ENCODE measurements at regions of chr7 and their contacts with region 1.

Region 1: GRCh38 chr7:27605689-27606269 is 56.9 kb downstream of the HIBADH start:
- DNase-seq: peak; percentile 75
- ATAC-seq: peak; percentile 68
- H3K4me3 ChIP-seq: peak overlapping the region; percentile 50
- H3K27ac ChIP-seq: peak overlapping the region; percentile 91
- H3K4me1 ChIP-seq: peaks cover 30% of the 10 kb centered on the region
- H3K27me3 ChIP-seq: no peaks in the 10 kb centered on the region
- CTCF ChIP-seq: peak; percentile 62

Region 2: DNA sequence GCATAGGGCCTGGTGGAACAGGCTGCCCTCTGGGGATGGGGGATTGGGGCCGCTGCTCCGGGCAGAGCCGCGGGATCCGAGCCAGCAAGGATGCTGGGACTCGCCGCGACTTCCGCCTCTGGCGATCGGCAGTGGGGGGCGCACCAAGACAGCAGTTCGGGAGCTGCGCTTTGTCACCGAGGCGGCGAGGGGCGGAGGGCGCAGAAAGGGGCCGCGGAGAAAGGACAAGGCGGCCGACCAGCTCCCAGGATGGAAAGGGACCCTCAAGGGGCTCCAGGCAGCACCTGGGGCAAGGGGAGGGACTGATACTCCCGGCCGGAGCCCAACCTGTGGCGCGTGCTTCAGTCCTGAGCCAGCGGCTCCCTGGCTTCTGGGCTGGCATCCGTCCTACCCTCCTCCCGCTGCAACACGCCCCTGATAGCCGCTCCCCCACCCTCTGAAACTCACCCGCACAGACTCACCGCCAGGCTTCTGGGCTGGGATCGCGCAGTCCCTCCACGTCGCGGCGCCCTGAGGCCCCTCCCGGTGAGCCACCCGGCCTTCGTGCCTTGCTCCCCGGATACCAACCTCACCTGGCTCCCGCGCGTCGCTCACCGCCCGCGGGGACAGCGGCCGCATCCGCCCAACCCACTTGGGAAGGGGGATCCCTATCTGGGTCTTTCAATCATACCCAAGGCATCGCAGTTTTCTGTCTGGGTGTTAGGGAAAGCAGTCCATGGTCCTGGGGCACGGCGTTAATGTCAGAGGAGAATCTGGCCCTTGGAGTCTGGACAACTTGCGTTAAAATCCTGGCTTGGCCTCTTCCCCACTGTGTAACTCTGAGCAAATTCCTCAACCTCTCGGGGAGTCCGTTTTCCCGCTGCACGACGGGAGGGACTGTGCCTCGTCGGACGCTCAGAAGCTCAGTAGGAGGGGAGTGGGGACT is 370.1 kb before region 1 on chr7:
- CTCF ChIA-PET with region 1: interaction called, 10 read pairs
- POLR2A ChIA-PET with region 1: no interaction called
- intact Hi-C with region 1: loop called (anchors 1 kb)
- DNase-seq: peak; percentile 62
- ATAC-seq: peak; percentile 76
- H3K4me3 ChIP-seq: peak overlapping the region; percentile 72
- H3K27ac ChIP-seq: no peak overlapping the region
- H3K4me1 ChIP-seq: peaks cover 9% of the 10 kb centered on the region; the same call in 1 of the 2 replicates
- H3K27me3 ChIP-seq: no peaks in the 10 kb centered on the region
- CTCF ChIP-seq: peak; percentile 75

Region 3: DNA sequence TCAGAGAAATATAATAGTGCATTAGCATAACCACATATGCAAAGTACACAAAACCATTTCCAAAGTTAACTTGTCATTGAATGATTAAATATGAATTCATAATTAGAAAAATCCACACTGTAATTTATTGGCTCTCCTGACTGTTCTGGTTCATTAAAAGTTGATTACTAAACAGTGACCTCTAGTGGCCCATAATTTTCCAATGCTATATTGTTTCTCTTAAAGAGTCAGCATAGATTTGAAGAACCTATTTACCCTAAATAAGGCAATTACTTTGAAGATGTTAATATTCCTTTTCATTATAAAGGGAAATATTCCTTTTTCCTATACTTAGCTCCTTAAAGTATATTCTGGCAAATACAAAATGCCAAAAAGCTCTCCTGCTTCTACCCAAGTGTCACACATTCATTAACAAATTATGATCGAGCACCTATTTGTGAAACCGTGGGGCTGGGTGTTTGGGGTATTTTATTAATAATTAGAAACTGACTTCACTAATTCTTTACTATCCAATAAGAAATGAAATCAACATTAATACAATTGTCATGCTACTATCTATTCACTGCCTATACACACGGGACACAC is 29.3 kb before region 1 on chr7:
- CTCF ChIA-PET with region 1: interaction called, 3 read pairs
- POLR2A ChIA-PET with region 1: no interaction called
- intact Hi-C with region 1: loop called (anchors 1 kb)
- DNase-seq: peak; percentile 79
- ATAC-seq: peak; percentile 56
- H3K4me3 ChIP-seq: no peak overlapping the region
- H3K27ac ChIP-seq: no peak overlapping the region
- H3K4me1 ChIP-seq: peaks cover 11% of the 10 kb centered on the region
- H3K27me3 ChIP-seq: no peaks in the 10 kb centered on the region
- CTCF ChIP-seq: peak; percentile 80

Region 4: GRCh38 chr7:27662490-27663205 is 56.9 kb after region 1 on chr7 and contains the start of gene HIBADH:
- CTCF ChIA-PET with region 1: interaction called, 5 read pairs
- POLR2A ChIA-PET with region 1: no interaction called
- intact Hi-C with region 1: loop called (anchors 1 kb)
- DNase-seq: peak; percentile 99
- ATAC-seq: peak; percentile 98
- H3K4me3 ChIP-seq: peak within 1 kb of the TSS; percentile 81
- H3K27ac ChIP-seq: peak within 1 kb of the TSS; percentile 60
- H3K4me1 ChIP-seq: 0 out of 2 replicates have a peak, but pooled peaks cover 7% of the 10 kb centered on the region
- H3K27me3 ChIP-seq: no peaks in the 10 kb centered on the region
- CTCF ChIP-seq: no peak
- total RNA-seq, gene HIBADH: 43.7 and 45.8 TPM in 2 replicates

Region 5: DNA sequence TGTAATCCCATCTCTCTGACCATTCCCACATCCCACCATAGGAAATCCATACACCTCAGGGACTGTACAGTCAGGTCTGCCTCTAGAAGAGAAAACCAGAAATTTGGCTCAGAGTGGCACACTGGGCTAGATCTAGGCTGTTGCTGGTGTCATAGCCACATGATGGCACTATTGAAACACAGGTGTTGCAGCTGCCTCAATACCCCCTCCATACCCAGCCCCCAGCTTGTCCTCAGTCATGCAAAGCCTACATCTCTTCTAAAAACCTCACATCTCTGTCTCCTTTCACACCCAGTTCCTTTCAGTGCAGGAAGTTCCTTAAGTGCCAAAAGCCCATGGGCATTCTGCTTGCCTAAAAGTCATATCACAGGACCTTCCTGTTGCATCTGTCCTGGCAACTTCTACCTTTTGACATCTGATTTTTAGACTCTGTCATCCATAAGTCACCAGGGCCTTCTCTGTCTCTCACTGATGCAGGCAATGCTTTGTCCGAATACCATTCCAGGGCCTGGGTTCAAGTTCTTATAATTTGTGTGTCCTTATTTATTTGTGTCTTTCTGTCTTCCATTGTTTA is 83.9 kb after region 1 on chr7:
- CTCF ChIA-PET with region 1: interaction called, 12 read pairs
- POLR2A ChIA-PET with region 1: no interaction called
- intact Hi-C with region 1: no loop called
- DNase-seq: peak; percentile 67
- ATAC-seq: peak; percentile 93
- H3K4me3 ChIP-seq: no peak overlapping the region
- H3K27ac ChIP-seq: no peak overlapping the region
- H3K4me1 ChIP-seq: peaks cover 18% of the 10 kb centered on the region
- H3K27me3 ChIP-seq: no peaks in the 10 kb centered on the region
- CTCF ChIP-seq: peak; percentile 89

Region 6: GRCh38 chr7:27784393-27785053 is 178.7 kb after region 1 on chr7:
- CTCF ChIA-PET with region 1: interaction called, 4 read pairs
- POLR2A ChIA-PET with region 1: no interaction called
- intact Hi-C with region 1: loop called (anchors 5 kb)
- DNase-seq: peak; percentile 96
- ATAC-seq: peak; percentile 97
- H3K4me3 ChIP-seq: no peak overlapping the region
- H3K27ac ChIP-seq: no peak overlapping the region
- H3K4me1 ChIP-seq: peaks cover 24% of the 10 kb centered on the region
- H3K27me3 ChIP-seq: no peaks in the 10 kb centered on the region
- CTCF ChIP-seq: peak; percentile 75